H1 (cell line): ENCODE measurements at regions of chr7 and their contacts with region 1.

Region 1: DNA sequence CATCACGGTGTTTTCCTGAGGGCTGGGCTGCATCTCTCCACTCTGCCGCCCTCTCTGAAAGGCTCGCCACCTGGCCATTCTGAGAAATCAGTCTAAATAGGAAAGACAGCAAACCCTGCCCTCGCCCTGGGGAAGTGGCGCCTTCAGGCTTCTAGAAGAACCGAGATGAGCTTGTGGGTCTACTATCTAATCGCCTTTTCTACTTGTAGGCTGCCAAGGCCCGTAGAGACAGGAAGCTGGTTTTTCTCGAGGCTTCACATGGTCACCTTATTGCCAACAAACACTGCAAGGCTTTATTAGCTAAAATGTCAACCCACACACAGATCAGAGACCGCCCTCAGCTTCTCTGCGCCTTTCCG is 21.4 kb downstream of the LAT2 start:
- DNase-seq: no peak
- H3K4me3 ChIP-seq: no peak overlapping the region
- H3K27ac ChIP-seq: no peak overlapping the region
- H3K4me1 ChIP-seq: no peaks in the 10 kb centered on the region
- H3K27me3 ChIP-seq: no peaks in the 10 kb centered on the region
- CTCF ChIP-seq: no peak
- EP300 ChIP-seq: no peak
- POLR2A ChIP-seq: no peak
- RAD21 ChIP-seq: no peak

Region 2: GRCh38 chr7:74217455-74218342 is 13.5 kb before region 1 on chr7:
- CTCF ChIA-PET with region 1: interaction called, 6 read pairs
- POLR2A ChIA-PET with region 1: interaction called, 19 read pairs
- DNase-seq: no peak
- H3K4me3 ChIP-seq: no peak overlapping the region
- H3K27ac ChIP-seq: no peak overlapping the region
- H3K4me1 ChIP-seq: peaks cover 0 to 2% (median 0%) of the 10 kb centered on the region in 4 experiments; a peak in 4 of 7 replicates
- H3K27me3 ChIP-seq: no peaks in the 10 kb centered on the region
- CTCF ChIP-seq: no peak
- EP300 ChIP-seq: no peak
- POLR2A ChIP-seq: no peak
- RAD21 ChIP-seq: no peak

Region 3: GRCh38 chr7:74242122-74242443 is 10.9 kb after region 1 on chr7:
- CTCF ChIA-PET with region 1: interaction called, 3 read pairs
- POLR2A ChIA-PET with region 1: interaction called, 14 read pairs
- DNase-seq: no peak
- H3K4me3 ChIP-seq: no peak overlapping the region
- H3K27ac ChIP-seq: no peak overlapping the region
- H3K4me1 ChIP-seq: no peaks in the 10 kb centered on the region
- H3K27me3 ChIP-seq: no peaks in the 10 kb centered on the region; a peak in 1 of 7 replicates
- CTCF ChIP-seq: no peak
- EP300 ChIP-seq: no peak
- POLR2A ChIP-seq: no peak
- RAD21 ChIP-seq: no peak